ENCODE measurements at regions of chr2 and their contacts with region 1.

Region 1: GRCh38 chr2:207710814-207711740 is at the start of gene CCNYL1:
- DNase-seq: peak; percentile 95 to 99 (median 97)
- ATAC-seq: peak; percentile 96
- H3K4me3 ChIP-seq: peak within 1 kb of the TSS; percentile 87 to 97
- H3K4me3 Mint-ChIP-seq: peak within 1 kb of the TSS; percentile 91
- H3K27ac ChIP-seq: peak within 1 kb of the TSS; percentile 69 to 71
- H3K27ac Mint-ChIP-seq: peak within 1 kb of the TSS; percentile 86
- H3K4me1 ChIP-seq: peaks cover 19% of the 10 kb centered on the region
- H3K4me1 Mint-ChIP-seq: peaks cover 22% of the 10 kb centered on the region
- H3K27me3 ChIP-seq: no peaks in the 10 kb centered on the region
- H3K27me3 Mint-ChIP-seq: no peaks in the 10 kb centered on the region
- CTCF ChIP-seq: no peak
- total RNA-seq, gene CCNYL1: 12.0 to 12.3 TPM

Region 2: DNA sequence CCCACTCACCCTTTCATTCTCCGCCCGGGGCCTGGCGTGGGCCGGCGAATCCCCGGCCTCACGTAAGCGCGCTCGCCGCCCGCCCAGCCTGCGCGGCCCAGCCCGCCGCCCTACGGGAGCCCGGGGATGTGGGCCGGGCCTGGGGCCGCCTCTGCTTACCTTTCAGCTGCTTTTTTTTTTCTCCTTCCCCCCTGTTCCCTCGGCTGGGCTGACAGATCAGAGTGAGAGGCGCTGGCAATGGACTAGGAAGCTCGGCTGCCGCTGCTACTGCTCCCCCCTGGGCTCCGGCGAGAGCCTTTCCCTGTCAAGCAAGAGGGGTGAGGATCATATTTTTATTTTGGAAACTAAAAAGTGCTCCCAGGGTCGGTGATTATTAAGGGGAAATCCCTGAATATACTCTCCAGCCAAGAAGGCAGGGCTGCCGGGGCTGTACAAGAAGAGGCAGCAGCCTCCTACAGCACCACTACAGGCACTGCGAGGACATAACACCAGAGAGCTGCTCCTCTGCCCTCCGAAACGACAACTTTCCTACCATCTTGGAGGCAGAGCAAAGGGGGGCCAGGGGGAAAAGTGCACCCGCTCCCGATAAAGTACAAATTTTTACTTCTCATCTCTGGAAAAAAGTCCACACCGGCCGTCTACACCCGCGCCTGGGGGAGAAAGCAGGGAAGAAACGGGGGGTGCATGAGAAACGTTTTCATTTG is 1625.2 kb before region 1 on chr2 and contains the start of gene INO80D:
- CTCF ChIA-PET with region 1: no interaction called
- POLR2A ChIA-PET with region 1: no interaction called
- intact Hi-C with region 1: loop called in 1 of 2 experiments (anchors 5 kb)
- DNase-seq: peak; percentile 63 to 93 (median 76)
- ATAC-seq: peak; percentile 91
- H3K4me3 ChIP-seq: peak within 1 kb of the TSS; percentile 85 to 88
- H3K4me3 Mint-ChIP-seq: peak within 1 kb of the TSS; percentile 100
- H3K27ac ChIP-seq: peak within 1 kb of the TSS; percentile 92 to 98
- H3K27ac Mint-ChIP-seq: peak within 1 kb of the TSS; percentile 100
- H3K4me1 ChIP-seq: peaks cover 32% of the 10 kb centered on the region
- H3K4me1 Mint-ChIP-seq: peaks cover 50% of the 10 kb centered on the region
- H3K27me3 ChIP-seq: no peaks in the 10 kb centered on the region
- H3K27me3 Mint-ChIP-seq: no peaks in the 10 kb centered on the region
- CTCF ChIP-seq: peak; percentile 66
- total RNA-seq, gene INO80D: 48.5 to 48.6 TPM

Region 3: GRCh38 chr2:206765242-206766056 is 945.6 kb before region 1 on chr2 and contains the starts of genes FASTKD2 and MDH1B:
- CTCF ChIA-PET with region 1: no interaction called
- POLR2A ChIA-PET with region 1: interaction called, 3 read pairs
- intact Hi-C with region 1: loop called (anchors 1 to 5 kb)
- DNase-seq: peak; percentile 64 to 94 (median 81)
- ATAC-seq: peak; percentile 87
- H3K4me3 ChIP-seq: peak within 1 kb of the TSS; percentile 62 to 94
- H3K4me3 Mint-ChIP-seq: peak within 1 kb of the TSS; percentile 94
- H3K27ac ChIP-seq: peak within 1 kb of the TSS; percentile 93 to 97
- H3K27ac Mint-ChIP-seq: peak within 1 kb of the TSS; percentile 98
- H3K4me1 ChIP-seq: peaks cover 40% of the 10 kb centered on the region
- H3K4me1 Mint-ChIP-seq: peaks cover 41% of the 10 kb centered on the region
- H3K27me3 ChIP-seq: no peaks in the 10 kb centered on the region
- H3K27me3 Mint-ChIP-seq: no peaks in the 10 kb centered on the region
- CTCF ChIP-seq: no peak
- total RNA-seq, gene FASTKD2: 31.3 to 33.8 TPM
- total RNA-seq, gene MDH1B: 0.19 to 0.33 TPM

Region 4: DNA sequence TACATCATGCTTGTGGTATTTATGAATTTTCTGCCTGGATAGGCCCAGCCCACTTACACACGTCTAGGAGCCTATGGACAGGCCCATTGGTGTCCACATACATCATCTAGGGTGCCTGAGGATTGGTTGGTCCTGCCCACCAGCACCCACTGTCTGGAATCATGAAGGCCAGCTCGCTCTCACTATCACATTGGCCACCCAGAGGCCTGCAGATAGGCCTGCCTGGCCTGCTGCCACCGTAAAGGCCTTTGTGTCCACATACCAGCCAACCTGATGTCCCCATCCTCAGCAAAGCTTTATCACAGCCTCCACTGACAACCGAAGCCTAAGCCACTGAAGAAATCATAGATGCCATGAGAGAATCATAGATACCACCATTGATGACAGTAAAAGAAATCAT is 126.1 kb before region 1 on chr2:
- CTCF ChIA-PET with region 1: no interaction called
- POLR2A ChIA-PET with region 1: no interaction called
- intact Hi-C with region 1: no loop called
- DNase-seq: no peak
- ATAC-seq: no peak
- H3K4me3 ChIP-seq: no peak overlapping the region
- H3K4me3 Mint-ChIP-seq: no peak overlapping the region
- H3K27ac ChIP-seq: no peak overlapping the region
- H3K27ac Mint-ChIP-seq: peak overlapping the region; percentile 56
- H3K4me1 ChIP-seq: no peaks in the 10 kb centered on the region
- H3K4me1 Mint-ChIP-seq: peaks cover 19% of the 10 kb centered on the region
- H3K27me3 ChIP-seq: no peaks in the 10 kb centered on the region
- H3K27me3 Mint-ChIP-seq: no peaks in the 10 kb centered on the region
- CTCF ChIP-seq: no peak

Region 5: GRCh38 chr2:207683879-207684627 is 27.0 kb before region 1 on chr2:
- CTCF ChIA-PET with region 1: no interaction called
- POLR2A ChIA-PET with region 1: no interaction called
- intact Hi-C with region 1: no loop called
- DNase-seq: no peak
- ATAC-seq: no peak
- H3K4me3 ChIP-seq: no peak overlapping the region
- H3K4me3 Mint-ChIP-seq: no peak overlapping the region
- H3K27ac ChIP-seq: no peak overlapping the region
- H3K27ac Mint-ChIP-seq: no peak overlapping the region
- H3K4me1 ChIP-seq: no peaks in the 10 kb centered on the region
- H3K4me1 Mint-ChIP-seq: no peaks in the 10 kb centered on the region
- H3K27me3 ChIP-seq: no peaks in the 10 kb centered on the region
- H3K27me3 Mint-ChIP-seq: peaks cover 21% of the 10 kb centered on the region
- CTCF ChIP-seq: no peak

Region 6: GRCh38 chr2:207769597-207770486 is 58.8 kb after region 1 on chr2 and contains the start of gene FZD5:
- CTCF ChIA-PET with region 1: no interaction called
- POLR2A ChIA-PET with region 1: interaction called, 4 read pairs
- intact Hi-C with region 1: loop called (anchors 1 to 5 kb)
- DNase-seq: peak; percentile 44 to 90 (median 74)
- ATAC-seq: peak; percentile 71
- H3K4me3 ChIP-seq: peak within 1 kb of the TSS; percentile 67 to 79
- H3K4me3 Mint-ChIP-seq: peak within 1 kb of the TSS; percentile 95
- H3K27ac ChIP-seq: no peak within 1 kb of the TSS
- H3K27ac Mint-ChIP-seq: no peak within 1 kb of the TSS
- H3K4me1 ChIP-seq: peaks cover 36% of the 10 kb centered on the region
- H3K4me1 Mint-ChIP-seq: peaks cover 33% of the 10 kb centered on the region
- H3K27me3 ChIP-seq: peaks cover 4 to 5% of the 10 kb centered on the region in 2 experiments
- H3K27me3 Mint-ChIP-seq: peaks cover 22% of the 10 kb centered on the region
- CTCF ChIP-seq: no peak
- total RNA-seq, gene FZD5: 0.39 to 0.54 TPM

Region 7: DNA sequence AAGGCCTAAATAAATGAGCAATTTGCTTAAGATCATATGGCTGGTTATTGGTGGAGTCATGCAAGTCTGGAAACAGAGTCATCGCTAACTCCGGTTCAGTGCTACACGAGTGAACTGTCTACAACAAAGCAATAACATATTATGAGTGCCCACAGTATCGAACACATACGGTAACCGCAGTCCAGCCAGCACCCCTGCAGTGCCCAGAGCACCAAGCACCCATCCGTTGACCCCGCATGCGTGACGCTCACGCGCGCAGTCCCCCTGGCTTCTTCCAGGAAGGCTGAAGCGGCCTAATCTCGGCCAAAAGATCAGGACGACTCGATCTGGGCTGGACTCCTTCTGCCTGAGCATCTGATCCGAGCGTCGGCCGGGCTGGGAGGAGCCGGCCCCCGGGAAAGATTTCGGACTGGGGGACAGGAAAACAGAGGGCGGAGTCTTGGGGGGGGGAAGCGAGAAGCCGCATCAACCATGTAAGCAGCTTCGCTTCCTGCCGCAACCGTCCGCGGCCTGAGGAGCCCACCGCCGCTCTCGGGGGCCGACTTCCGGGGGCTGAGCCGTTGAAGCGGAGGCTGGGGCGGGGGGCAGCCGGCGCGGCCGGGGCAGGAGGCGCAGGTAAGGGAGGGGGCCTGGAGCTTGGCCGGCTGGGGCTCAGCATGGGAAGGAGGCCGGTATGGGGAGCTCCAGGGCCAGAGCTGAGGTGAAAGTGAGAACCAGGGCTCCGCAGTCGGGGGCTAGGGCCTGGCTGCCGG is 554.9 kb after region 1 on chr2 and contains the start of gene PIKFYVE:
- CTCF ChIA-PET with region 1: no interaction called
- POLR2A ChIA-PET with region 1: no interaction called
- intact Hi-C with region 1: loop called in 1 of 2 experiments (anchors 5 kb)
- DNase-seq: peak; percentile 71 to 95 (median 88)
- ATAC-seq: peak; percentile 80
- H3K4me3 ChIP-seq: peak within 1 kb of the TSS; percentile 70 to 86
- H3K4me3 Mint-ChIP-seq: peak within 1 kb of the TSS; percentile 86
- H3K27ac ChIP-seq: peak within 1 kb of the TSS; percentile 67 to 88
- H3K27ac Mint-ChIP-seq: peak within 1 kb of the TSS; percentile 98
- H3K4me1 ChIP-seq: peaks cover 21% of the 10 kb centered on the region
- H3K4me1 Mint-ChIP-seq: peaks cover 45% of the 10 kb centered on the region
- H3K27me3 ChIP-seq: no peaks in the 10 kb centered on the region
- H3K27me3 Mint-ChIP-seq: no peaks in the 10 kb centered on the region
- CTCF ChIP-seq: no peak
- total RNA-seq, gene PIKFYVE: 27.7 to 29.1 TPM